PC-3 (cell line): ENCODE measurements at regions of chr3 and their contacts with region 1.

Region 1: DNA sequence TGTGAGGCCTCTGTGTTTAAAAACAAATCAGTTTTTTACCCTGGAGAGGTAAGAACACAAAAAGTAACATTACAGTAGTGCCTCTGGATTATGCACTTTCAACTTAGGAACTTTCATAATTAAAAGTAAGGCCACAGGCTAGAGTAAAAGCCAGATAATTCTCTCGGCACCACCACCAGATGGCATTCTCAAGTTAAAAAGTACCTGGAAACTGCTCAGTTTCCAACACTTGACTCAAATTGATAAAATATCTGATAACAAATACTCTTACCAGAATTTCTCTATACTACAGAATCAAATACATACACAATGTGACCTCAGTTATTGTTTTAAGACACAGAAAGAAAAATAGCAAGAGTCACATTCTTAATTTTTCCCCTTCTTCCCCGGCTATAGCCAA is 19.9 kb downstream of the SPICE1 start:
- DNase-seq: peak; percentile 78
- ATAC-seq: peak; percentile 64
- H3K4me3 ChIP-seq: no peak overlapping the region
- H3K27ac ChIP-seq: peak overlapping the region; percentile 9; the same call in 1 of the 2 replicates
- H3K4me1 ChIP-seq: peaks cover 25% of the 10 kb centered on the region
- H3K27me3 ChIP-seq: no peaks in the 10 kb centered on the region
- CTCF ChIP-seq: peak; percentile 91

Region 2: GRCh38 chr3:113051302-113051711 is 443.7 kb before region 1 on chr3:
- CTCF ChIA-PET with region 1: no interaction called
- POLR2A ChIA-PET with region 1: no interaction called
- intact Hi-C with region 1: loop called (anchors 5 kb)
- DNase-seq: peak; percentile 97
- ATAC-seq: peak; percentile 95
- H3K4me3 ChIP-seq: peak overlapping the region; percentile 39
- H3K27ac ChIP-seq: no peak overlapping the region
- H3K4me1 ChIP-seq: peaks cover 4% of the 10 kb centered on the region
- H3K27me3 ChIP-seq: no peaks in the 10 kb centered on the region
- CTCF ChIP-seq: peak; percentile 95

Region 3: GRCh38 chr3:113531826-113532697 is 37.0 kb after region 1 on chr3 and contains the start of gene SIDT1:
- CTCF ChIA-PET with region 1: interaction called, 6 read pairs
- POLR2A ChIA-PET with region 1: no interaction called
- intact Hi-C with region 1: loop called (anchors 1 kb)
- DNase-seq: peak; percentile 76
- ATAC-seq: peak; percentile 43
- H3K4me3 ChIP-seq: peak within 1 kb of the TSS; percentile 84
- H3K27ac ChIP-seq: peak within 1 kb of the TSS; percentile 95
- H3K4me1 ChIP-seq: peaks cover 44% of the 10 kb centered on the region
- H3K27me3 ChIP-seq: no peaks in the 10 kb centered on the region
- CTCF ChIP-seq: peak; percentile 35
- total RNA-seq, gene SIDT1: 14.1 and 18.4 TPM in 2 replicates

Region 4: GRCh38 chr3:113575206-113575605 is 80.2 kb after region 1 on chr3:
- CTCF ChIA-PET with region 1: interaction called, 28 read pairs
- POLR2A ChIA-PET with region 1: no interaction called
- intact Hi-C with region 1: loop called (anchors 1 kb)
- DNase-seq: peak; percentile 40
- ATAC-seq: peak; percentile 7; the same call in 1 of the 2 replicates
- H3K4me3 ChIP-seq: no peak overlapping the region
- H3K27ac ChIP-seq: peak overlapping the region; percentile 96
- H3K4me1 ChIP-seq: peaks cover 39% of the 10 kb centered on the region
- H3K27me3 ChIP-seq: no peaks in the 10 kb centered on the region
- CTCF ChIP-seq: no peak

Region 5: DNA sequence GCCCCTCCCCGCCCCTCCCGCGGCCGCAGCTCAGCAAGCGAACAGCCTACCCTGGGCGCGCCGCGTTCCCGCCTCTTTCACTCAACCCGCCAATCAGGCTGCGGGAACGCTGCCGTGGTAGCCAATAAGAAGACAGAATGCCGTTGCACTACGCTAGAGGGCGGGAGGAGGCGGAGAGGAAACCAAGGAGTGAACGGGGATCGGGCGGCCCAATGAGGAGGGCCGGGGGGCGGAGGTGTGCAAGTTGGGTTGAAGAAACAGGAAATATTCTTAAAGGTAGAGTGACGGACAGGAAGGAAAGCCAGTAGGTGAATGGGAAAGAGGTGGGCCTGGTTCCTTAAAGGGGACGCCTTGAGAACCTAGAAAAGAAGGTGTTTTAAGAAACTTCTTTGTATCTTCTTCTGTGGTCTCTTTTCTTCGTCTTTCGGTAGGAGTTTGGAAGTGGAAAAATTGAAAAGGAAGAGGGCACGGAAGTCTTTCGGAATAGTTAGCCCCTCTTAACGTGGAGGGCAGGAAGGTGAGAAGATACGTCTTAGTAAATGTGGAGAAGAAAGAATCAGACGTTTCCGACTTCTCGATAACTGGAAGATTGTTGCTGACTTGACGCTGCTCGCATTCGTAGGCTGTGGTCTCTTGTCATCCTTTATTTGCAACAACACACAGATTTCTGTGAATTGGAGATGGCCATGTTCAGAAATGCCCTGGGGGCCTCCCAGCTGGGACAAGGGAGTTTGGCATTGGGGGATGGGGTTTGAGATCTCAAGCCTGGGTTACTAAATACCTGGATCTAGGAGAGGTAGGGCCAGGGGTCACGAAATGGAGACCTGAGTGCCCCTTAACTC is 201.8 kb after region 1 on chr3:
- CTCF ChIA-PET with region 1: no interaction called
- POLR2A ChIA-PET with region 1: no interaction called
- intact Hi-C with region 1: loop called (anchors 10 kb)
- DNase-seq: peak; percentile 99
- ATAC-seq: peak; percentile 82
- H3K4me3 ChIP-seq: peak overlapping the region; percentile 73
- H3K27ac ChIP-seq: no peak overlapping the region
- H3K4me1 ChIP-seq: peaks cover 14% of the 10 kb centered on the region
- H3K27me3 ChIP-seq: no peaks in the 10 kb centered on the region
- CTCF ChIP-seq: no peak

Region 6: DNA sequence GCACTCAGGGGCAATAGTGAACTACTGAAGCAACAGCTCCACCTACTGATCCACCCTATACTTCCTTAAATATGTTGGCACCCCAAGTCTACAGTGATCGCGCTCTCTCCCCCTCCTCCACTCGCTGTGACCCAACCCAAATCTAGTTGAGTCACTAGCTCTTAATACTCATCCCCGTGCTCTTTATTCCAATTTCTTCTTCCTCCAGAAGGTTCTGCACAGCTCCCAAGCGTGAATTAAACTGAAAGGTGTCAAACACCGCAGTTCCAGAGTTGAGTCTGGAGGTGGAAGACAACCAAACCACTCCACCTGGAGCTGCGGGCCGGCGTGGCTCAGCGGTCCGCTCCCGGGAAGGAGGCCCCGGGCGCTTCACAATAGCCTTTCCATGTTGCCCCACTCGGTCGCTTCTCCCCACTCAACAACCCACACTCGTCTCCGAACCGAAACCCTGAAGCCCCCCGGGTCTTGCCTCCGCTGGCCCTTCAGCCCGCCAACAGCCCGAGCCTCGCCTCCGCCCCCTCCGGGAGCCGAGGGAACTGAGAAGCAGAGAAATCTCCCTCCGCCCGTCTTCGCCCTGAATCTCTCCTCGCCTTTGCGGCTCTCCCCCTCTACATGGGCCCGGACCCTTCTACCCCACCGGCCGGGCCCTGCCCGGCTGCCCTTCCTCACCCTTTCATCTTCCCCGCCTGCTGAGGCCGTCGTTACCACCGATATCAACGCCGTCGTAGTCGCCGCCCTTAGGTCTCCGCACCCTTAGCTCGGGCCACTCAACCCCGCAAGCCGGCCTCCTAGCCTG is 250.4 kb after region 1 on chr3:
- CTCF ChIA-PET with region 1: no interaction called
- POLR2A ChIA-PET with region 1: no interaction called
- intact Hi-C with region 1: loop called (anchors 2 kb)
- DNase-seq: peak; percentile 93
- ATAC-seq: peak; percentile 64
- H3K4me3 ChIP-seq: peak overlapping the region; percentile 96
- H3K27ac ChIP-seq: peak overlapping the region; percentile 89
- H3K4me1 ChIP-seq: peaks cover 47% of the 10 kb centered on the region
- H3K27me3 ChIP-seq: no peaks in the 10 kb centered on the region
- CTCF ChIP-seq: peak; percentile 72